B cell (primary cell): ENCODE measurements at regions of chr2 and their contacts with region 1.

Region 1: GRCh38 chr2:181404472-181404871 is 52.7 kb upstream of the ITGA4 start:
- DNase-seq: no peak
- ATAC-seq: peak; percentile 28
- H3K4me3 ChIP-seq: no peak overlapping the region
- H3K4me3 Mint-ChIP-seq: no peak overlapping the region
- H3K27ac ChIP-seq: no peak overlapping the region
- H3K27ac Mint-ChIP-seq: no peak overlapping the region
- H3K4me1 ChIP-seq: peaks cover 22 to 23% of the 10 kb centered on the region in 2 donors
- H3K4me1 Mint-ChIP-seq: peaks cover 52% of the 10 kb centered on the region
- H3K27me3 ChIP-seq: no peaks in the 10 kb centered on the region
- H3K27me3 Mint-ChIP-seq: no peaks in the 10 kb centered on the region
- CTCF ChIP-seq: no peak

Region 2: GRCh38 chr2:180583441-180584140 is 820.9 kb before region 1 on chr2:
- CTCF ChIA-PET with region 1: no interaction called
- POLR2A ChIA-PET with region 1: no interaction called
- intact Hi-C with region 1: no loop called
- DNase-seq: no peak
- ATAC-seq: no peak
- H3K4me3 ChIP-seq: no peak overlapping the region
- H3K4me3 Mint-ChIP-seq: no peak overlapping the region
- H3K27ac ChIP-seq: no peak overlapping the region
- H3K27ac Mint-ChIP-seq: no peak overlapping the region
- H3K4me1 ChIP-seq: no peaks in the 10 kb centered on the region
- H3K4me1 Mint-ChIP-seq: no peaks in the 10 kb centered on the region
- H3K27me3 ChIP-seq: no peaks in the 10 kb centered on the region
- H3K27me3 Mint-ChIP-seq: peaks cover 12% of the 10 kb centered on the region
- CTCF ChIP-seq: no peak

Region 3: GRCh38 chr2:181364492-181365170 is 39.8 kb before region 1 on chr2:
- CTCF ChIA-PET with region 1: no interaction called
- POLR2A ChIA-PET with region 1: no interaction called
- intact Hi-C with region 1: loop called (anchors 5 kb)
- DNase-seq: no peak
- ATAC-seq: no peak
- H3K4me3 ChIP-seq: no peak overlapping the region
- H3K4me3 Mint-ChIP-seq: no peak overlapping the region
- H3K27ac ChIP-seq: no peak overlapping the region
- H3K27ac Mint-ChIP-seq: no peak overlapping the region
- H3K4me1 ChIP-seq: peaks cover 5 to 12% of the 10 kb centered on the region in 2 donors
- H3K4me1 Mint-ChIP-seq: peaks cover 16% of the 10 kb centered on the region
- H3K27me3 ChIP-seq: no peaks in the 10 kb centered on the region
- H3K27me3 Mint-ChIP-seq: no peaks in the 10 kb centered on the region
- CTCF ChIP-seq: no peak

Region 4: DNA sequence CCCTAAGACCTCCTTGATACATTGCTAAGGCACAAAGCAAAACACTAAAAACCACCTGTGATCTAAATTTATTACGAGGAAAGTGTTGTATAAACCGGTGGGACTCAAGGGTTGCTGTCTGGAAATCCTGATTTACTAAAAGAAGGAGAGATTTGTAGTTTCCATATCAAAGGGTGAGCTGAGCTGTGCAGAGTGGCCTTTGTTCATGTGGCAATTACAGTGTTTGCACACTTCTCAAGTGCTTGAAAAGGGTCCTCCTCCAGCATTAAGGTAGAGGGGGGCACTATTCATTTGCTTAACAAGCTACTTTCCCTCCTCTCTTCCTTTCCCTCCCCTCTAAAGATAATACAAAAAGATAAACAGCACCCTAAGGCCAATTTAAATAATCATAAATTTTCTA is 22.2 kb after region 1 on chr2:
- CTCF ChIA-PET with region 1: no interaction called
- POLR2A ChIA-PET with region 1: no interaction called
- intact Hi-C with region 1: no loop called
- DNase-seq: no peak
- ATAC-seq: no peak
- H3K4me3 ChIP-seq: no peak overlapping the region
- H3K4me3 Mint-ChIP-seq: no peak overlapping the region
- H3K27ac ChIP-seq: no peak overlapping the region
- H3K27ac Mint-ChIP-seq: no peak overlapping the region
- H3K4me1 ChIP-seq: peaks cover 16 to 19% of the 10 kb centered on the region in 2 donors
- H3K4me1 Mint-ChIP-seq: peaks cover 24% of the 10 kb centered on the region
- H3K27me3 ChIP-seq: no peaks in the 10 kb centered on the region
- H3K27me3 Mint-ChIP-seq: no peaks in the 10 kb centered on the region
- CTCF ChIP-seq: no peak